Endothelial cell of umbilical vein (primary cell): ENCODE measurements at regions of chr9 and their contacts with region 1.

Region 1: DNA sequence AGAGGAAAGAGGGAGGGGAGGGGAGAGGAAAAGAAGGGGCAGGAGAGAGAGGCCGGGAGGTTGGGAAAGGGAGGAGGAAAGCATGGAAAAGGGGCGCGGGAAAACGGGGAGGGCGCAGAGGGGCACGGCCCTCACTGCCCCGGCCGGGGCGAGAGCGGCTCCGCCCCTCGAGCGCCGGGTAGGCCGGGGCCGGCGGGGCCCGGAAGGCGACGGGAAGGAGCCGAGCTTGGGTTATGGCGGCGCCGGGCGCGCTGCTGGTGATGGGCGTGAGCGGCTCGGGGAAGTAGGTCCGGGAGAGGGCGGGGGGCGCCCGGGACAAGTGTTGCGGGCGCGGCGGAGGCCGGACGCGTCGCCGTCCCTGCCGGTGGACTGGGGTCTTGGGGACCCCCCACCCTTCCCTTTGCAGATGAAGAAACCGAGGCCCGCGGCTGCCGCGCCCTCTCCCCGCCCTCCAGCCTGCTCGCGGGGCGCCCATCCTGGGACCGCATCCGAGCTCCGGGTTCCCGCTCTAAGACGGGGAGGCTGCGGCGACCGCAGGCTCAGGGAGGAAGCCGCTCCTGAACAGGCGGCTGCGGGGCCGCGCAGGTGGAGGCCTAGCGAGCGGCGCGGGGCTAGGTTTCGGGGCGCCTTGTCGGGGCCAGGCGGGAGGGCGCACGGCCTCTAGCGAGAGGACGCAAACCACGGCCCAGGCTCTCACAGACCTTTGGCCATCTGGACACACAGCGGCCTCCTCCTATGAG is at the start of gene IDNK:
- DNase-seq: peak; percentile 53
- H3K4me3 ChIP-seq: peak within 1 kb of the TSS; percentile 71 to 83 (median 81)
- H3K27ac ChIP-seq: peak within 1 kb of the TSS; percentile 68
- H3K4me1 ChIP-seq: peaks cover 10% of the 10 kb centered on the region
- H3K27me3 ChIP-seq: peaks cover 1 to 3% of the 10 kb centered on the region in 2 experiments
- CTCF ChIP-seq: no peak
- POLR2A ChIP-seq: peak; percentile 26
- total RNA-seq, gene IDNK: 3.4 and 4.5 TPM in 2 replicates

Region 2: GRCh38 chr9:83257937-83258891 is 364.9 kb before region 1 on chr9:
- CTCF ChIA-PET with region 1: no interaction called
- POLR2A ChIA-PET with region 1: no interaction called
- dilution Hi-C with region 1: no loop called
- intact Hi-C with region 1: no loop called
- DNase-seq: no peak
- H3K4me3 ChIP-seq: no peak overlapping the region
- H3K27ac ChIP-seq: no peak overlapping the region
- H3K4me1 ChIP-seq: peaks cover 3% of the 10 kb centered on the region
- H3K27me3 ChIP-seq: no peaks in the 10 kb centered on the region
- CTCF ChIP-seq: no peak
- POLR2A ChIP-seq: no peak

Region 3: GRCh38 chr9:83554278-83554677 is 68.8 kb before region 1 on chr9:
- CTCF ChIA-PET with region 1: no interaction called
- POLR2A ChIA-PET with region 1: no interaction called
- dilution Hi-C with region 1: no loop called
- intact Hi-C with region 1: no loop called
- DNase-seq: no peak
- H3K4me3 ChIP-seq: no peak overlapping the region
- H3K27ac ChIP-seq: no peak overlapping the region
- H3K4me1 ChIP-seq: no peaks in the 10 kb centered on the region
- H3K27me3 ChIP-seq: no peaks in the 10 kb centered on the region
- CTCF ChIP-seq: no peak
- POLR2A ChIP-seq: no peak

Region 4: DNA sequence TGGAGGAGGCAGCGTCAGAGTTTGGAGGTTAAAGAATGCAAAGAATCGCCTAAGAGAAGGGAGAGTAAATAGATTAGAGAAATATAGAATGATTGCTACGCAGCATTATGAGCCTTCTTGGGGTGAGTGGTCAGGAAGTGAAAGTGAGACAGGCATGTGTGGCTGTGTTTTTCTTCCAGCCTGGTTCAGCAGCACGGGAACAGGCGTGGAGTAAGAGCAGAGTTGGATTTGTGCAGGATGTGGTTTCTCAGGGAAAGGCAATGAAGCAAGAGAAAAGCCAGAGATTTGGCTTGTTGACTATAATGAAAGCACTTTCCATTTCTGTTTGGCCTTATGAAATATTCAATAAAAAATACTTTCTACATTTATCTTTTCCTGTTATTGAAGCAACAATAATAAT is 50.6 kb before region 1 on chr9:
- CTCF ChIA-PET with region 1: no interaction called
- POLR2A ChIA-PET with region 1: no interaction called
- dilution Hi-C with region 1: no loop called
- intact Hi-C with region 1: no loop called
- DNase-seq: no peak
- H3K4me3 ChIP-seq: no peak overlapping the region
- H3K27ac ChIP-seq: no peak overlapping the region
- H3K4me1 ChIP-seq: peaks cover 6% of the 10 kb centered on the region
- H3K27me3 ChIP-seq: no peaks in the 10 kb centered on the region
- CTCF ChIP-seq: no peak
- POLR2A ChIP-seq: no peak

Region 5: DNA sequence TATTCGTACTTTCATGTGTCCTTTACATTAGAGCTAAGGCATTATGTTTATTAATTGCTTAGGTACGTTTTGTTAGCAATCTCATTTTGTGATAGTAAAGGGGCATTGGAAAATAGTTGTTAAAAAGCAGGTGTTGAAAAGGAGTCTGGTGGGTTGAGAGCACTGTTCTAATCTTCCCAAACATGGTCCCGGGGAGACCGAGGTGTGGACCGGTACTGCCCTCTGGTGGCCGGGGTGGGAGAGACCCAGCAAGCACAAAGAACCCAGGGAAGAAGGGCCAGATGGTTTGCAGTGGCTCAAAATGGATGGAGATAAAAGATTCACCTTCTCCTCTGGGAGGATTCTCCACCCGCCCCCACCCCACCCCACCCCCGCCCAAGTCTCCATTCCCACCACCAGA is 26.0 kb after region 1 on chr9:
- CTCF ChIA-PET with region 1: interaction called, 47 read pairs
- POLR2A ChIA-PET with region 1: no interaction called
- dilution Hi-C with region 1: no loop called
- intact Hi-C with region 1: loop called (anchors 1 kb)
- DNase-seq: peak; percentile 32
- H3K4me3 ChIP-seq: no peak overlapping the region
- H3K27ac ChIP-seq: no peak overlapping the region
- H3K4me1 ChIP-seq: no peaks in the 10 kb centered on the region
- H3K27me3 ChIP-seq: no peaks in the 10 kb centered on the region
- CTCF ChIP-seq: peak; percentile 70 to 77
- POLR2A ChIP-seq: no peak

Region 6: GRCh38 chr9:83707768-83708514 is 84.8 kb after region 1 on chr9 and contains the start of gene UBQLN1:
- CTCF ChIA-PET with region 1: interaction called, 25 read pairs
- POLR2A ChIA-PET with region 1: no interaction called
- dilution Hi-C with region 1: no loop called
- intact Hi-C with region 1: loop called (anchors 1 kb)
- DNase-seq: peak; percentile 93
- H3K4me3 ChIP-seq: peak within 1 kb of the TSS; percentile 18 to 100 (median 57)
- H3K27ac ChIP-seq: peak within 1 kb of the TSS; percentile 99
- H3K4me1 ChIP-seq: peaks cover 16% of the 10 kb centered on the region
- H3K27me3 ChIP-seq: no peaks in the 10 kb centered on the region
- CTCF ChIP-seq: no peak
- POLR2A ChIP-seq: peak; percentile 93
- total RNA-seq, gene UBQLN1: 101 and 110 TPM in 2 replicates

Region 7: GRCh38 chr9:83920927-83921707 is 298.0 kb after region 1 on chr9 and contains the start of gene KIF27:
- CTCF ChIA-PET with region 1: interaction called, 8 read pairs
- POLR2A ChIA-PET with region 1: no interaction called
- dilution Hi-C with region 1: no loop called
- intact Hi-C with region 1: loop called (anchors 2 kb)
- DNase-seq: peak; percentile 98
- H3K4me3 ChIP-seq: peak within 1 kb of the TSS; percentile 41 to 78 (median 69)
- H3K27ac ChIP-seq: peak within 1 kb of the TSS; percentile 69
- H3K4me1 ChIP-seq: peaks cover 10% of the 10 kb centered on the region
- H3K27me3 ChIP-seq: no peaks in the 10 kb centered on the region
- CTCF ChIP-seq: peak; percentile 8 to 36
- POLR2A ChIP-seq: peak; percentile 93
- total RNA-seq, gene KIF27: 3.2 and 3.5 TPM in 2 replicates

Region 8: GRCh38 chr9:84315278-84315877 is 692.3 kb after region 1 on chr9:
- CTCF ChIA-PET with region 1: interaction called, 10 read pairs
- POLR2A ChIA-PET with region 1: no interaction called
- dilution Hi-C with region 1: no loop called
- intact Hi-C with region 1: no loop called
- DNase-seq: peak; percentile 68
- H3K4me3 ChIP-seq: no peak overlapping the region
- H3K27ac ChIP-seq: no peak overlapping the region
- H3K4me1 ChIP-seq: peaks cover 2% of the 10 kb centered on the region
- H3K27me3 ChIP-seq: peaks cover 0 to 5% of the 10 kb centered on the region in 2 experiments
- CTCF ChIP-seq: peak; percentile 57 to 74
- POLR2A ChIP-seq: no peak